CD4-positive, alpha-beta memory T cell (primary cell): ENCODE measurements at regions of chr1 and their contacts with region 1.

Region 1: GRCh38 chr1:151968058-151968457 is 25.6 kb downstream of the S100A10 start:
- DNase-seq: peak; percentile 60 to 75 (median 73)
- H3K4me3 ChIP-seq: no peak overlapping the region
- H3K4me3 Mint-ChIP-seq: peak overlapping the region in 1 of 8 donors; percentile 42
- H3K27ac ChIP-seq: no peak overlapping the region
- H3K27ac Mint-ChIP-seq: peak overlapping the region in 2 of 7 donors; percentile 65 to 68
- H3K4me1 ChIP-seq: peaks cover 9% of the 10 kb centered on the region
- H3K4me1 Mint-ChIP-seq: peaks cover 8 to 26% (median 13%) of the 10 kb centered on the region in 4 donors
- H3K27me3 ChIP-seq: no peaks in the 10 kb centered on the region
- H3K27me3 Mint-ChIP-seq: peaks cover 0 to 3% of the 10 kb centered on the region in 2 donors

Region 2: GRCh38 chr1:151888972-151889570 is 79.0 kb before region 1 on chr1:
- CTCF ChIA-PET with region 1: interaction called, 17 read pairs
- POLR2A ChIA-PET with region 1: no interaction called
- intact Hi-C with region 1: no loop called
- DNase-seq: peak in 4 of 5 donors; percentile 27 to 45 (median 34)
- H3K4me3 ChIP-seq: no peak overlapping the region
- H3K4me3 Mint-ChIP-seq: no peak overlapping the region
- H3K27ac ChIP-seq: no peak overlapping the region
- H3K27ac Mint-ChIP-seq: peak overlapping the region in 6 of 7 donors; percentile 18 to 84 (median 64)
- H3K4me1 ChIP-seq: peaks cover 21% of the 10 kb centered on the region
- H3K4me1 Mint-ChIP-seq: peaks cover 27 to 38% (median 33%) of the 10 kb centered on the region in 4 donors
- H3K27me3 ChIP-seq: no peaks in the 10 kb centered on the region
- H3K27me3 Mint-ChIP-seq: no peaks in the 10 kb centered on the region

Region 3: GRCh38 chr1:151915061-151915686 is 52.9 kb before region 1 on chr1:
- CTCF ChIA-PET with region 1: no interaction called
- POLR2A ChIA-PET with region 1: no interaction called
- intact Hi-C with region 1: no loop called
- DNase-seq: no peak
- H3K4me3 ChIP-seq: no peak overlapping the region
- H3K4me3 Mint-ChIP-seq: no peak overlapping the region
- H3K27ac ChIP-seq: no peak overlapping the region
- H3K27ac Mint-ChIP-seq: no peak overlapping the region
- H3K4me1 ChIP-seq: no peaks in the 10 kb centered on the region
- H3K4me1 Mint-ChIP-seq: peaks cover 0 to 4% (median 0%) of the 10 kb centered on the region in 4 donors
- H3K27me3 ChIP-seq: no peaks in the 10 kb centered on the region
- H3K27me3 Mint-ChIP-seq: peaks cover 0 to 1% of the 10 kb centered on the region in 2 donors

Region 4: DNA sequence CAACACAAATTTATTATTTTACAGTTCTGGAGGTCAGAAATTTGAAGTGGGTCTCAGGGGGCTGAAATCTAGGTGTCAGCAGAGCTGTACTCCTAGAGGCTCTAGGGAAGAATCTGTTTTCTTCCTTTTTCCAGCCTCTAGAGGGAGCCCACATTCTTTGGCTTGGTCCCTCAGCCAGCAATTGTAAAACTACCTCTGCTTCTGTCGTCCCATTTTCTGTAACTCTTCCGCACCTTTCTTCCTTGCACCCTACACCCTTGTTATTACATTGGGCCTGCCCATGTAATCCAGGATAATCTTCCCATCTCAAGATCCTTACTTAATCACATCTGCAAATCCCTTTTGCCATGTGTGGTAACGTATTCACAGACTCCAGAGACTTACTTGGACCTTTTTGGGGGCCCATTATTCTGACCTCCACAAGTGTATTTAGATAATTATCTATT is 34.0 kb before region 1 on chr1:
- CTCF ChIA-PET with region 1: interaction called, 62 read pairs
- POLR2A ChIA-PET with region 1: interaction called, 4 read pairs
- intact Hi-C with region 1: loop called (anchors 5 kb)
- DNase-seq: peak; percentile 52 to 75 (median 69)
- H3K4me3 ChIP-seq: no peak overlapping the region
- H3K4me3 Mint-ChIP-seq: peak overlapping the region in 1 of 8 donors; percentile 4
- H3K27ac ChIP-seq: no peak overlapping the region
- H3K27ac Mint-ChIP-seq: peak overlapping the region in 5 of 7 donors; percentile 31 to 91 (median 65)
- H3K4me1 ChIP-seq: no peaks in the 10 kb centered on the region
- H3K4me1 Mint-ChIP-seq: peaks cover 4 to 6% (median 4%) of the 10 kb centered on the region in 4 donors
- H3K27me3 ChIP-seq: no peaks in the 10 kb centered on the region
- H3K27me3 Mint-ChIP-seq: peaks cover 0 to 4% of the 10 kb centered on the region in 2 donors

Region 5: GRCh38 chr1:151939779-151940178 is 28.3 kb before region 1 on chr1:
- CTCF ChIA-PET with region 1: interaction called, 62 read pairs
- POLR2A ChIA-PET with region 1: interaction called, 7 read pairs
- intact Hi-C with region 1: loop called (anchors 5 kb)
- DNase-seq: no peak
- H3K4me3 ChIP-seq: no peak overlapping the region
- H3K4me3 Mint-ChIP-seq: no peak overlapping the region
- H3K27ac ChIP-seq: no peak overlapping the region
- H3K27ac Mint-ChIP-seq: peak overlapping the region in 1 of 7 donors; percentile 48
- H3K4me1 ChIP-seq: peaks cover 36% of the 10 kb centered on the region
- H3K4me1 Mint-ChIP-seq: peaks cover 25 to 31% (median 26%) of the 10 kb centered on the region in 4 donors
- H3K27me3 ChIP-seq: no peaks in the 10 kb centered on the region
- H3K27me3 Mint-ChIP-seq: peaks cover 0 to 4% of the 10 kb centered on the region in 2 donors

Region 6: GRCh38 chr1:151945725-151946364 is 22.2 kb before region 1 on chr1:
- CTCF ChIA-PET with region 1: interaction called, 16 read pairs
- POLR2A ChIA-PET with region 1: interaction called, 7 read pairs
- intact Hi-C with region 1: no loop called
- DNase-seq: peak; percentile 87 to 97 (median 93)
- H3K4me3 ChIP-seq: peak overlapping the region in 1 of 2 donors; percentile 25
- H3K4me3 Mint-ChIP-seq: peak overlapping the region; percentile 49 to 80 (median 67)
- H3K27ac ChIP-seq: peak overlapping the region; percentile 82
- H3K27ac Mint-ChIP-seq: peak overlapping the region; percentile 94 to 98 (median 96)
- H3K4me1 ChIP-seq: peaks cover 53% of the 10 kb centered on the region
- H3K4me1 Mint-ChIP-seq: peaks cover 44 to 48% (median 47%) of the 10 kb centered on the region in 4 donors
- H3K27me3 ChIP-seq: no peaks in the 10 kb centered on the region
- H3K27me3 Mint-ChIP-seq: no peaks in the 10 kb centered on the region

Region 7: GRCh38 chr1:151984313-151984956 is 16.4 kb after region 1 on chr1:
- CTCF ChIA-PET with region 1: interaction called, 52 read pairs
- POLR2A ChIA-PET with region 1: interaction called, 4 read pairs
- intact Hi-C with region 1: no loop called
- DNase-seq: peak in 1 of 5 donors; percentile 39
- H3K4me3 ChIP-seq: no peak overlapping the region
- H3K4me3 Mint-ChIP-seq: peak overlapping the region in 5 of 8 donors; percentile 1 to 61 (median 51)
- H3K27ac ChIP-seq: peak overlapping the region; percentile 6
- H3K27ac Mint-ChIP-seq: peak overlapping the region; percentile 21 to 90 (median 62)
- H3K4me1 ChIP-seq: peaks cover 49% of the 10 kb centered on the region
- H3K4me1 Mint-ChIP-seq: peaks cover 41 to 59% (median 48%) of the 10 kb centered on the region in 4 donors
- H3K27me3 ChIP-seq: no peaks in the 10 kb centered on the region
- H3K27me3 Mint-ChIP-seq: no peaks in the 10 kb centered on the region

Region 8: DNA sequence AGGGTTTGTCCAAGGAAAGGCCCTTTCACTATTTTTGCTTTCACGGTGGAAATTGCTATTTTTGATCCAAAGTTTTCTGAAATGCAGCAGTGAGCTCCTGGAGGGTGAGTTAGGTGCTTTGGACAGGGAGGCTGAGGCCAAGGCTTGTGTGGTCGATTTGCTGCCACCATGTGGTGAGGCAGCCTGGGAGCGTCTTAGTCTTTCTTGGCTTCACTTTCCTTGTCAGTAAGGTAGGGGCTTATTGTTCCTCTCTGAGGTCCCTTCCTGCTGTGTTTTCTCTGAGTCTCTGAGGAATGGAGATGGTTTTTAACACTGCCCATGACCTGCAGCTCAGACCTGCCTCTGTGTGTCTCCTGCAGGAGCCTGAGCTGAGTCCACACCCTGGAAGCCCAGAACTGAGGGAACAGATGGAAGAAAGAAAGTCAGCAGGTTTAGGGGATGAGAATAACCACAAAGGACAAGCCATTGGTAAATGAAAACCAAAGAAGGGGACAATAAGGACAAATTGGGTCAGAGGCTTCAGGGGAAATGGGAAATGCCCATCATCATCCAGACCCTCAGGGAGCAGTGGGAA is 45.7 kb after region 1 on chr1:
- CTCF ChIA-PET with region 1: interaction called, 10 read pairs
- POLR2A ChIA-PET with region 1: no interaction called
- intact Hi-C with region 1: no loop called
- DNase-seq: peak in 2 of 5 donors; percentile 31 to 33
- H3K4me3 ChIP-seq: no peak overlapping the region
- H3K4me3 Mint-ChIP-seq: no peak overlapping the region
- H3K27ac ChIP-seq: no peak overlapping the region
- H3K27ac Mint-ChIP-seq: no peak overlapping the region
- H3K4me1 ChIP-seq: no peaks in the 10 kb centered on the region
- H3K4me1 Mint-ChIP-seq: peaks cover 0 to 5% (median 2%) of the 10 kb centered on the region in 4 donors
- H3K27me3 ChIP-seq: no peaks in the 10 kb centered on the region
- H3K27me3 Mint-ChIP-seq: peaks cover 2 to 3% of the 10 kb centered on the region in 2 donors

Region 9: GRCh38 chr1:152380932-152381331 is 412.9 kb after region 1 on chr1:
- CTCF ChIA-PET with region 1: no interaction called
- POLR2A ChIA-PET with region 1: no interaction called
- intact Hi-C with region 1: no loop called
- DNase-seq: no peak
- H3K4me3 ChIP-seq: no peak overlapping the region
- H3K4me3 Mint-ChIP-seq: no peak overlapping the region
- H3K27ac ChIP-seq: no peak overlapping the region
- H3K27ac Mint-ChIP-seq: no peak overlapping the region
- H3K4me1 ChIP-seq: no peaks in the 10 kb centered on the region
- H3K4me1 Mint-ChIP-seq: peaks cover 0 to 13% (median under 1%) of the 10 kb centered on the region in 4 donors
- H3K27me3 ChIP-seq: no peaks in the 10 kb centered on the region
- H3K27me3 Mint-ChIP-seq: peaks cover 4 to 10% of the 10 kb centered on the region in 2 donors